Activated CD4-positive, alpha-beta T cell treated with anti-CD3 and anti-CD28 coated beads for 36 hours (primary cell): ENCODE measurements at regions of chr19 and their contacts with region 1.

Region 1: GRCh38 chr19:3185482-3186376 is at the start of gene NCLN:
- DNase-seq: peak; percentile 97
- ATAC-seq: peak; percentile 86
- H3K4me3 Mint-ChIP-seq: peak within 1 kb of the TSS; percentile 83
- H3K27ac Mint-ChIP-seq: peak within 1 kb of the TSS; percentile 94
- H3K4me1 Mint-ChIP-seq: peaks cover 56% of the 10 kb centered on the region
- H3K27me3 Mint-ChIP-seq: no peaks in the 10 kb centered on the region
- total RNA-seq, gene NCLN: 55.6 to 58.2 TPM

Region 2: GRCh38 chr19:2782936-2783780 is 402.6 kb before region 1 on chr19 and contains the start of gene SGTA:
- CTCF ChIA-PET with region 1: no interaction called
- POLR2A ChIA-PET with region 1: no interaction called
- intact Hi-C with region 1: loop called in 1 of 2 experiments (anchors 1 kb)
- DNase-seq: peak; percentile 98
- ATAC-seq: peak; percentile 84
- H3K4me3 Mint-ChIP-seq: peak within 1 kb of the TSS; percentile 91
- H3K27ac Mint-ChIP-seq: peak within 1 kb of the TSS; percentile 98
- H3K4me1 Mint-ChIP-seq: peaks cover 58% of the 10 kb centered on the region
- H3K27me3 Mint-ChIP-seq: no peaks in the 10 kb centered on the region
- total RNA-seq, gene SGTA: 53.0 to 62.2 TPM

Region 3: DNA sequence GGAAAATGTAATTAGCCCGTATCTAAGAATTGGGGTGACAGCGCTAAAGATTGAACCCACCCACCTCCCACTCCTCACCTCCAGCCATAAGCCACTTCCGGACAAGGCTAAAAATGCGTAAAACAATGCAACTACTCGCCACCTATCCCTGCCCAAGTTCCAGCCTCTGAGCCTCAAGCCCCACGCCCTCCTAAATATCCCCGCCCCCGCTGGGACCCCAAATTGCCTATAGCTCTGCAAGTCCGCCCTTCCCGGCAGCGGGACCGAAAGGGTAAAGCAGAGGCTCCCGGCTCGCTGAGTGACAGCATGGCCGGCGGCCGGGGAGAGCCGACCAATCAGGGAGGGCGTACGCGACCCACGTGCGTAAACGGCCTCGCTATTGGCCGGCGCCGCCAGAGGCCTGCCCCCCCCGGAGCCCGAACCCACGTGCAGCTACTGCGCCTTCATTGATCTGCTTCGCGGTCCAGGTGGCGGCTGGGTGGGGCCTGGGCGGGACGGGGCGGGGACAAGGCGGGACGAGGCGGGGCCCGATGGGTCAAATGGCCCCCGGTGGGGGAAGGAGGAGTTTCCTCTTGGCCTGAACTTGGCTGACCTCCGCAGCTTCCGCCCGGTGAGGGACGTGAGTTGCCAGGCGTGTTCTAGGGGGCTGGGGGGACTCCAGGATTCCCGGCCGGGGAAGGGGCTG is 208.6 kb before region 1 on chr19 and contains the start of gene TLE6:
- CTCF ChIA-PET with region 1: no interaction called
- POLR2A ChIA-PET with region 1: no interaction called
- intact Hi-C with region 1: loop called in 1 of 2 experiments (anchors 1 kb)
- DNase-seq: peak; percentile 98
- ATAC-seq: peak; percentile 100
- H3K4me3 Mint-ChIP-seq: peak within 1 kb of the TSS; percentile 77
- H3K27ac Mint-ChIP-seq: peak within 1 kb of the TSS; percentile 63
- H3K4me1 Mint-ChIP-seq: peaks cover 14% of the 10 kb centered on the region
- H3K27me3 Mint-ChIP-seq: peaks cover 4% of the 10 kb centered on the region
- total RNA-seq, gene TLE6: 2.6 to 3.5 TPM

Region 4: GRCh38 chr19:3046698-3047424 is 138.9 kb before region 1 on chr19:
- CTCF ChIA-PET with region 1: no interaction called
- POLR2A ChIA-PET with region 1: no interaction called
- intact Hi-C with region 1: no loop called
- DNase-seq: no peak
- ATAC-seq: no peak
- H3K4me3 Mint-ChIP-seq: no peak overlapping the region
- H3K27ac Mint-ChIP-seq: no peak overlapping the region
- H3K4me1 Mint-ChIP-seq: peaks cover 12% of the 10 kb centered on the region
- H3K27me3 Mint-ChIP-seq: no peaks in the 10 kb centered on the region

Region 5: DNA sequence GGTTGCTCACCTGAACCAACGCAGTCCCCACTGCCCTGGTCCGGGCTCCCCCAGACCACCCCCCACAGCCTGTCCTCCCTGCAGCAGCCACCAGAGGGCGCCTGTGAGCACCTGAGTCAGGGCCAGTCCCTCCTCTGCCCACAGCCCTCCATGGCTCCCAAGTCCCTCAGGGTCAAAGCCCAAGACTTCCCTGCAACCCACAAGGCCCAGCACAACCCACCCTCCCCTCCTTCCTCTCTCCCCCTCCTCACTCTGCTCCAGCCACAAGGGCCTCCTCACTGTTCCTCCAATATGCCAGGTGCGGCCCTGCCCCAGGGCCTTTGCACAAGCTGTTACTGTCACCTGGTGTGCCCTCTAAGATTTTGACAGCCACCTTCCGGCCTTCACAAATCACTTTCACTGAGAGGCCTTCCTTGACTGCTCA is 39.0 kb before region 1 on chr19:
- CTCF ChIA-PET with region 1: no interaction called
- POLR2A ChIA-PET with region 1: no interaction called
- intact Hi-C with region 1: loop called in 1 of 2 experiments (anchors 5 kb)
- DNase-seq: peak; percentile 83
- ATAC-seq: peak; percentile 55
- H3K4me3 Mint-ChIP-seq: no peak overlapping the region
- H3K27ac Mint-ChIP-seq: no peak overlapping the region
- H3K4me1 Mint-ChIP-seq: peaks cover 20% of the 10 kb centered on the region
- H3K27me3 Mint-ChIP-seq: no peaks in the 10 kb centered on the region

Region 6: DNA sequence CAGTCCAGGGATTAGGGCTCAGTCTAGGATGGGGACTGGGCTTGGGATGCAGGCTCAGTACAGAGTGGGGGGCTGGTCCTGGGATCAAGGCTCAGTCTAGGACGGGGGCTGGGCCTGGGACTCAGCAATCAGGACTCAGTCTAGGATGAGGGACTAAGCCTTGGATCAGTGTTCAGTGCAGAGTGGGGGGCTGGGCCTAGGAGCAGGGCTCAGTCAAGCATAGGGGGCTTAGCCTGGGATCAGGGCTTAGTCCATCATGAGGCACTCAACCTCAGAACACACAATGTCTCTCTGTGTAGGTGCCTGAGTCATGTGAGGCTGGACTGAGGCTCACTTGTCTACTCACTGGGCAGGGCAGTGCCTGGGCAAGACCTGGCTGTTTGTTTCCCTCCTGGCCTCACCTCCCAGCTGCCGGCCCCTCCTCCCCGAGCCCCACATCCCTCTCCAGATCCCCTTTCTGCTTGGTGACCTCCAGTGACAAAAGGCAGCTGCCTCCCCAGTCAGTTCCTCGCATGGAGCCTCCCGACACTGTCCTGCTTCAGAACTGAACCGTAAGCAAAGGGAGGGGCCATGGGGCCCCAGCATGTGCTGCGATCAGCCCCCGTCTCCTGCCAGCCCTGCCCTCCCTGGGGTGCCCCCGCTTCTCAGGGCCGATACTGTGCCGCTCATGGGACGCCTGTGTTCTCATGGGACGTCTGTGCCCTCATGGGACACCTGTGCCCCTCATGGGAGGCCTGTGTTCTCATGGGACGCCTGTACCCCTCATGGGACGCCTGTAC is 13.6 kb before region 1 on chr19:
- CTCF ChIA-PET with region 1: no interaction called
- POLR2A ChIA-PET with region 1: no interaction called
- intact Hi-C with region 1: no loop called
- DNase-seq: no peak
- ATAC-seq: peak; percentile 13
- H3K4me3 Mint-ChIP-seq: no peak overlapping the region
- H3K27ac Mint-ChIP-seq: no peak overlapping the region
- H3K4me1 Mint-ChIP-seq: peaks cover 16% of the 10 kb centered on the region
- H3K27me3 Mint-ChIP-seq: no peaks in the 10 kb centered on the region

Region 7: GRCh38 chr19:3505598-3506383 is 320.1 kb after region 1 on chr19 and contains the start of gene FZR1:
- CTCF ChIA-PET with region 1: interaction called, 3 read pairs
- POLR2A ChIA-PET with region 1: no interaction called
- intact Hi-C with region 1: loop called in 1 of 2 experiments (anchors 1 kb)
- DNase-seq: peak; percentile 100
- ATAC-seq: peak; percentile 92
- H3K4me3 Mint-ChIP-seq: peak within 1 kb of the TSS; percentile 84
- H3K27ac Mint-ChIP-seq: peak within 1 kb of the TSS; percentile 86
- H3K4me1 Mint-ChIP-seq: peaks cover 45% of the 10 kb centered on the region
- H3K27me3 Mint-ChIP-seq: no peaks in the 10 kb centered on the region
- total RNA-seq, gene FZR1: 40.8 to 50.7 TPM

Region 8: GRCh38 chr19:3801412-3802096 is 615.8 kb after region 1 on chr19:
- CTCF ChIA-PET with region 1: no interaction called
- POLR2A ChIA-PET with region 1: no interaction called
- intact Hi-C with region 1: no loop called
- DNase-seq: peak; percentile 79
- ATAC-seq: peak; percentile 62
- H3K4me3 Mint-ChIP-seq: peak overlapping the region; percentile 50
- H3K27ac Mint-ChIP-seq: no peak overlapping the region
- H3K4me1 Mint-ChIP-seq: peaks cover 22% of the 10 kb centered on the region
- H3K27me3 Mint-ChIP-seq: no peaks in the 10 kb centered on the region

Region 9: GRCh38 chr19:3984908-3985642 is 799.3 kb after region 1 on chr19 and contains the start of gene EEF2:
- CTCF ChIA-PET with region 1: no interaction called
- POLR2A ChIA-PET with region 1: no interaction called
- intact Hi-C with region 1: loop called in 1 of 2 experiments (anchors 1 kb)
- DNase-seq: peak; percentile 94
- ATAC-seq: peak; percentile 45
- H3K4me3 Mint-ChIP-seq: peak within 1 kb of the TSS; percentile 87
- H3K27ac Mint-ChIP-seq: peak within 1 kb of the TSS; percentile 94
- H3K4me1 Mint-ChIP-seq: peaks cover 52% of the 10 kb centered on the region
- H3K27me3 Mint-ChIP-seq: no peaks in the 10 kb centered on the region
- total RNA-seq, gene EEF2: 3,116 to 3,255 TPM